ENCODE measurements at regions of chr6 and their contacts with region 1.

Region 1: DNA sequence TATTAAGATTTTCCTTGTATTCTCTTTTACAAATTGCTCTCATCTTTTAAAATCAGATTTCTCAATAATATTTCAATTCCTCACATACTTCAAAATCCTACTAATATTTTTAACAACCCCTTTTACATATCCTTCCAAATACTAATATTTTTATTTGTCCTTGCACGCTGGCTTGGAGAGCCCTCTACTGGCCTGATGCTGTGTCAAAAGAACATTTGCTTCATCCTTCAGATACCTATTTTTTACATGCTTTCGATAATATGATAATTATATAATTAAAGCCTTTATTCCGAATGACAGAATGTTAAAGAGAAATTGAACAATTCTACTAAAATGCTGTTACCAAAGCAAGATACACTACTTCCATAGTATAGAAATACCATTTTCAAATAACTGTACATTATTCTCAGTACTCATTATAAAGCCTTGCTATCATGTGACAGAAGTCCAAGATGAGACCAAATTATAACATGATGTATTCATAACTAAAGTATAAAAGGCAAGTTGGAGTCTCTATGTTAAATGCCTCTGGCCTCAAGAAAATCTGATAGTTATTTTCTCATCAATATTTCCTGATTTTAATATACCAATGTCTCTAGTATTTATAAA is 39.0 kb upstream of the PLN start:
- DNase-seq: no peak
- H3K4me3 ChIP-seq: no peak overlapping the region
- H3K27ac ChIP-seq: no peak overlapping the region
- H3K4me1 ChIP-seq: no peaks in the 10 kb centered on the region
- H3K27me3 ChIP-seq: no peaks in the 10 kb centered on the region
- CTCF ChIP-seq: peak; percentile 66 to 71

Region 2: DNA sequence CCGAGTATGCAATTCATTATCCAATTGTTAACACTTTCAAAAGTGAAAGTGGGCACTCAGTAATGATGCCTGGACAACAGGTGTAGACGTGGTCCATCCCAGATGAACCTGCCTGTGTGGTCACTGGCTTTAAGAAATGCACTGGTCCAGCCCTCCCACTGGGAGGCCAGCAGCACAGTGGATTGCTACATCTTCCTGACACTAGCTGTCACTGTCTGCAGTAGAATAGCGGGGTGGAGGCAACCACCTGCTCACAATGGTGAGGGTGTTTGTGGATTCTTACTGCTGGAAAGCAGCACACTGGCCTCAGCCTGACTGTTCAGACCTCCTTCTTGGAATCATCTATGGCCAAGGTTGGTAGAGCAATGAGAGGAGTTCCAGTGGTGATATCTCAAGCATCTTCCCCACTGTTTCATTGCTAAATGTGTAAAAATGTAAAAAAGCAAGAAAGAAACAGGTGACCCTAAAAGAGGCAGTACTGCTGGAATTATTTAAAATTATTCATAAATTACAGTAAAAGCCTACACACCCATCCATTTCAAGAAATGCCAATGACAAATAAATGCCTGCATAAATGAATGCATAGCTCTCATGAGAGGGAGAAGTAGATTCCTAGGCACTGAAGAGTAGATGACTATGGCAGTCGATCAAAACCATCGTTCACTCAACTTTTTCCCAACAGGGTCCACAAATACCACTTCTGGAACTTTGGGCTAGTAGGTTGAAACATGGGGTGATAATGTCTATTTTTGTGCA is 189.0 kb before region 1 on chr6:
- CTCF ChIA-PET with region 1: no interaction called
- dilution Hi-C with region 1: no loop called
- in situ Hi-C with region 1: no loop called
- intact Hi-C with region 1: loop called (anchors 1 kb)
- DNase-seq: no peak
- H3K4me3 ChIP-seq: no peak overlapping the region
- H3K27ac ChIP-seq: no peak overlapping the region
- H3K4me1 ChIP-seq: no peaks in the 10 kb centered on the region
- H3K27me3 ChIP-seq: no peaks in the 10 kb centered on the region
- CTCF ChIP-seq: peak in 1 of 2 donors; percentile 3

Region 3: DNA sequence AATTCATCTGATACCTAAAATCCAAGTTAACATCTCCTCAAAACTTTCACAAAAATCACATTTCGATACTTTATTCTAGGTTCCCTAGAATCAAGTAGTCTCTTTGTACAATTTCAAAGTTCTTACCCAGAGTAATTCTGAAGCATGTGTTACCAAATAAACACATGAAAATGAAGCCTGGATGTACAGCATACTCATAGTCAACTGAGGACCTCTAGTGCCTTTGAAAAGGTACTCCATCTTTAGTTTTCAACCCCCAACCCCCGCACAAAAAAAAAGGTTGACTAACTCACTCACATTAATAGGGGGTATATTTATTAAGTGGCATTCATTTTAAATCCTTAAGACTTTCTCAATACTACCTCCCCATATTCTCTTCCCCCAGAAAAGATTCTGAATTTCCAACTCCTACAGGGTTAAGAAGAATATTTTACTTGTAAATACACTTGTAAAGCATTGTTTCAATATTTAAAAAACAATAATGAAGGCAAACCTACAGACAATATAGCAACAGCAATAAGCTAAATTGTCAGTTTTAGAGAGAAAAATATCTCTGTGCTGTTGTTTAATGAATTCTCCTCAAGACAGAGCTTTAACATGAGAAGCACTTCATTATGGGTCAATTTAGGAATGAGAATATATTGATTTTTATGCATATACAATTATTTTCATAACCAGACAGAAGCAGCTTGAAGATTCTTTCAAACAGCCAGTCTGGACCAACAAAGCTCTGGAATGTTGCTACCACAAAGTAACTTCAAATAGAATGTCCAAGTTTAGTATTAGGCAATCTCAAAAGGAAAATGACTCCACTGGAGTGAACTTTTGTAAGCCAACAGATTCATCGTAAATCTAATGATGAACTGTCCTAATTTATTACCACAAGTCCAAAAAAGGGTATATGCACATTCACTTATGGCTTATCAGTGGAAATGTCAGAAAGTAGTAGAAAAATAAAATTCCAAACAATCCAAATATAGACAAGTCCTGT is 42.2 kb after region 1 on chr6:
- CTCF ChIA-PET with region 1: no interaction called
- dilution Hi-C with region 1: no loop called
- in situ Hi-C with region 1: no loop called
- intact Hi-C with region 1: loop called (anchors 2 kb)
- DNase-seq: peak; percentile 37
- H3K4me3 ChIP-seq: peak overlapping the region in 1 of 3 experiments; percentile 11
- H3K27ac ChIP-seq: no peak overlapping the region
- H3K4me1 ChIP-seq: peaks cover 5% of the 10 kb centered on the region
- H3K27me3 ChIP-seq: no peaks in the 10 kb centered on the region
- CTCF ChIP-seq: peak; percentile 58 to 71

Measured in mammary epithelial cell (primary cell).